ENCODE measurements at regions of chr17 and their contacts with region 1.

Region 1: GRCh38 chr17:18855831-18856569 is 1.9 kb upstream of the PRPSAP2 start:
- DNase-seq: peak; percentile 57 to 93 (median 85)
- ATAC-seq: peak; percentile 89
- H3K4me3 ChIP-seq: peak overlapping the region; percentile 76
- H3K4me3 Mint-ChIP-seq: peak overlapping the region; percentile 79 to 99 (median 96)
- H3K27ac ChIP-seq: peak overlapping the region; percentile 79
- H3K27ac Mint-ChIP-seq: peak overlapping the region; percentile 77 to 98 (median 92)
- H3K4me1 ChIP-seq: peaks cover 18 to 28% of the 10 kb centered on the region in 2 donors
- H3K4me1 Mint-ChIP-seq: peaks cover 29 to 52% (median 44%) of the 10 kb centered on the region in 7 donors
- H3K27me3 ChIP-seq: no peaks in the 10 kb centered on the region
- H3K27me3 Mint-ChIP-seq: no peaks in the 10 kb centered on the region

Region 2: GRCh38 chr17:18183334-18184142 is 672.5 kb before region 1 on chr17 and contains the start of gene ALKBH5:
- CTCF ChIA-PET with region 1: no interaction called
- POLR2A ChIA-PET with region 1: no interaction called
- intact Hi-C with region 1: loop called in 1 of 2 experiments (anchors 10 kb)
- DNase-seq: peak; percentile 97 to 99 (median 99)
- ATAC-seq: peak; percentile 88
- H3K4me3 ChIP-seq: peak within 1 kb of the TSS; percentile 78
- H3K4me3 Mint-ChIP-seq: peak within 1 kb of the TSS; percentile 83 to 99 (median 94)
- H3K27ac ChIP-seq: peak within 1 kb of the TSS; percentile 93
- H3K27ac Mint-ChIP-seq: peak within 1 kb of the TSS; percentile 96 to 99 (median 98)
- H3K4me1 ChIP-seq: peaks cover 36 to 40% of the 10 kb centered on the region in 2 donors
- H3K4me1 Mint-ChIP-seq: peaks cover 40 to 59% (median 46%) of the 10 kb centered on the region in 7 donors
- H3K27me3 ChIP-seq: no peaks in the 10 kb centered on the region
- H3K27me3 Mint-ChIP-seq: peaks cover 0 to 3% (median 0%) of the 10 kb centered on the region in 5 donors
- total RNA-seq, gene ALKBH5: 97.4 to 135 (median 108) TPM

Region 3: GRCh38 chr17:18314731-18315561 is 541.1 kb before region 1 on chr17 and contains the starts of genes SMCR8 and TOP3A:
- CTCF ChIA-PET with region 1: no interaction called
- POLR2A ChIA-PET with region 1: no interaction called
- intact Hi-C with region 1: loop called in 1 of 2 experiments (anchors 5 kb)
- DNase-seq: peak; percentile 86 to 99 (median 98)
- ATAC-seq: peak; percentile 96
- H3K4me3 ChIP-seq: peak within 1 kb of the TSS; percentile 95
- H3K4me3 Mint-ChIP-seq: peak within 1 kb of the TSS; percentile 89 to 98 (median 93)
- H3K27ac ChIP-seq: peak within 1 kb of the TSS; percentile 93
- H3K27ac Mint-ChIP-seq: peak within 1 kb of the TSS; percentile 92 to 99 (median 95)
- H3K4me1 ChIP-seq: peaks cover 50 to 54% of the 10 kb centered on the region in 2 donors
- H3K4me1 Mint-ChIP-seq: peaks cover 61 to 88% (median 83%) of the 10 kb centered on the region in 7 donors
- H3K27me3 ChIP-seq: no peaks in the 10 kb centered on the region
- H3K27me3 Mint-ChIP-seq: peaks cover 0 to 2% (median 0%) of the 10 kb centered on the region in 5 donors
- total RNA-seq, gene SMCR8: 29.0 to 61.7 (median 52.1) TPM
- total RNA-seq, gene TOP3A: 39.0 to 74.9 (median 43.6) TPM

Region 4: DNA sequence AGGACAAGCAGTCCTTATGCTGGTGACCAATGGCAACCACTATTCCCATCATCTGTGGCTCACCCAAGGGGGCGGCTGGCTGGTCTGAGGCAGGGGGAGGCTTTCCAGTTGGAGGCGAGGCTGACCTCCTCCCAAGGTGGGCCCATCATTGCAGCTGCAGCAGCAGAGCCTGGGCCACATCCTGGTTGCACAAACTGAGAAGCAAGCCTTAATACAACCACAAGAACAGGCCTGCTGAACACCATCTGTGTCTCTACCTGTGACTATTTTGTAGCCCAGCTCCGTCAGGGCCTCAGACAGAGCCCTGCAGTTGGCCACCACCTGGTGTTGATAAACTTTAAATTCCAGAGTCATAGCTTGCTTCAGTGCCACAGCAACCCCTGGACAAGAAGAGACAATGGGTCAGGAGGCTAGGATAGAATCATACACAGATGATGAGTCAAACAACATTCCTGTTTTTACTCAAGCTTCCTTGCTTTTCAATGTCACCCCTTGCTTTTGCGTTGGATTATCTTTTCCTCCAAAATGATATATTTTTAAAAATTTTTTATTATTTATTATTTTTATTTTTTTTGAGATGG is 523.0 kb before region 1 on chr17:
- CTCF ChIA-PET with region 1: no interaction called
- POLR2A ChIA-PET with region 1: no interaction called
- intact Hi-C with region 1: no loop called
- DNase-seq: no peak
- ATAC-seq: no peak
- H3K4me3 ChIP-seq: no peak overlapping the region
- H3K4me3 Mint-ChIP-seq: no peak overlapping the region
- H3K27ac ChIP-seq: no peak overlapping the region
- H3K27ac Mint-ChIP-seq: no peak overlapping the region
- H3K4me1 ChIP-seq: peaks cover 0 to 13% of the 10 kb centered on the region in 2 donors
- H3K4me1 Mint-ChIP-seq: peaks cover 8 to 15% (median 9%) of the 10 kb centered on the region in 7 donors
- H3K27me3 ChIP-seq: no peaks in the 10 kb centered on the region
- H3K27me3 Mint-ChIP-seq: no peaks in the 10 kb centered on the region

Region 5: DNA sequence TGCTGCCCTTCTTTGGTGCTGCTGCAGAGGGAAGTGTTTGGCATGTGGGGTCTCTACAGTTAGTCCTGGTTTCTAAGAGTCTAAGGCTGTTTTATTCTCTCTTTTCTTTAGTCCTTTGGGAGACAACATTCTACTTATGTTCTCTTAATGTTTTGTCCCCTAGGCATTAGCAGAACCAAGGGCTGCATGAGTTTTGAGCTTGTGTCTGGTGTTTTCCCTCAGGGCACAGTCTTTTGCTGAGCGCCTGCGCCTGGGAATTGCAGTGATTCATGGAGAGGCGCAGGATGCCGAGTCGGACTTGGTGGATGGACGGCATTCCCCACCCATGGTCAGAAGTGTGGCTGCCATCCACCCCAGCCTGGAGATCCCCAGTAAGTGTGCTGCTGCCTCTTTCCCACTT is 54.9 kb after region 1 on chr17:
- CTCF ChIA-PET with region 1: no interaction called
- POLR2A ChIA-PET with region 1: no interaction called
- intact Hi-C with region 1: no loop called
- DNase-seq: no peak
- ATAC-seq: no peak
- H3K4me3 ChIP-seq: no peak overlapping the region
- H3K4me3 Mint-ChIP-seq: no peak overlapping the region
- H3K27ac ChIP-seq: no peak overlapping the region
- H3K27ac Mint-ChIP-seq: no peak overlapping the region
- H3K4me1 ChIP-seq: no peaks in the 10 kb centered on the region
- H3K4me1 Mint-ChIP-seq: peaks cover 0 to 29% (median 14%) of the 10 kb centered on the region in 7 donors
- H3K27me3 ChIP-seq: no peaks in the 10 kb centered on the region
- H3K27me3 Mint-ChIP-seq: no peaks in the 10 kb centered on the region

Region 6: DNA sequence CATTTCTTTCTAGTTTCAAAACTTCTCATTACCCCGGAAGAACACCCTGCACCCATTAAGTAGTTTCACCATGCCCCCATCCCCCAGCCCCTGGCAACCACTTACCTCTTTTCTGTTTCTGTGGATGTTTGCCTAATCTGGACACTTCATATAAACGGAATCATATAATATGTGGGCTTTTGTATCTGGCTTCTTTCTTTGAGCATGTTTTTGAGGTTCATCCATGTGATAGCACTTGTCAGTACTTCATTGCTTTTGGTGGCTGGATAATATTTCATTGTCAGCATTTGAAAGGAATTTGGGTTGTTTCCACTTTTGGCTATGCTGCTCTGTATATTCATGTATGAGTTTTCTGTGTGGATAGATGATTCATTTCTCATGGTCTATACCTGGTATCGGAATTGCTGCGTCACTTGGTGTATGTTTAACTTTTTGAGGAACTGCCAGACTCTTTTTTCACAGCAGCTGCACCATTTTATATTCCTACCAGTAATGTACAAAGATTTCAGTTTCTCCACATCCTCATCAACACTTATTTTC is 66.0 kb after region 1 on chr17:
- CTCF ChIA-PET with region 1: no interaction called
- POLR2A ChIA-PET with region 1: no interaction called
- intact Hi-C with region 1: loop called (anchors 2 kb)
- DNase-seq: no peak
- ATAC-seq: no peak
- H3K4me3 ChIP-seq: no peak overlapping the region
- H3K4me3 Mint-ChIP-seq: peak overlapping the region in 8 of 10 donors; percentile 13 to 63 (median 50)
- H3K27ac ChIP-seq: no peak overlapping the region
- H3K27ac Mint-ChIP-seq: peak overlapping the region; percentile 20 to 70 (median 60)
- H3K4me1 ChIP-seq: peaks cover 9 to 58% of the 10 kb centered on the region in 2 donors
- H3K4me1 Mint-ChIP-seq: peaks cover 34 to 90% (median 74%) of the 10 kb centered on the region in 7 donors
- H3K27me3 ChIP-seq: no peaks in the 10 kb centered on the region
- H3K27me3 Mint-ChIP-seq: no peaks in the 10 kb centered on the region

Region 7: DNA sequence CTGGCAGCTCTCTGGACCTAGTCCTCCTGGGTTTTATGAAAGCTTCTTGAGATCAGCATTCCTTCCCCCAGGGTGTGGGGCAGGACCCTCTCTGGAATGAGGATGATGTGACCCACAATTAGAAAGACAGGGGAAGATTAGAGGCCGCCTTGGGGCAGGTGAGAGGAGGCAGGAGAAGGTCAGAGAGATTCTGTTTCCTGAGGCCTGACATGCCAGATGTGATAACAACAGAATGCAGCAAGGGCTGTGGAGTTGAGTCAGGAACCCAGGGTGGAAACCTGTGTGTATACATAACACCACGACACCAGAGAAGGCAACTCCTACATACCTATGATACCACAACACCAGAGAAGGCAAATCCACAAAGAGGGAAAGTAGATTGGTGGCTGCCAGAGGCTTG is 90.5 kb after region 1 on chr17:
- CTCF ChIA-PET with region 1: no interaction called
- POLR2A ChIA-PET with region 1: no interaction called
- intact Hi-C with region 1: no loop called
- DNase-seq: no peak
- ATAC-seq: no peak
- H3K4me3 ChIP-seq: no peak overlapping the region
- H3K4me3 Mint-ChIP-seq: no peak overlapping the region
- H3K27ac ChIP-seq: no peak overlapping the region
- H3K27ac Mint-ChIP-seq: peak overlapping the region in 1 of 9 donors; percentile 48
- H3K4me1 ChIP-seq: no peaks in the 10 kb centered on the region
- H3K4me1 Mint-ChIP-seq: peaks cover 0 to 38% (median 13%) of the 10 kb centered on the region in 7 donors
- H3K27me3 ChIP-seq: no peaks in the 10 kb centered on the region
- H3K27me3 Mint-ChIP-seq: peaks cover 0 to 38% (median 0%) of the 10 kb centered on the region in 5 donors

Region 8: GRCh38 chr17:19004421-19005136 is 148.6 kb after region 1 on chr17 and contains the start of gene FAM83G:
- CTCF ChIA-PET with region 1: no interaction called
- POLR2A ChIA-PET with region 1: interaction called, 3 read pairs
- intact Hi-C with region 1: loop called in 1 of 2 experiments (anchors 10 kb)
- DNase-seq: peak; percentile 67 to 92 (median 71)
- ATAC-seq: peak; percentile 90
- H3K4me3 ChIP-seq: peak within 1 kb of the TSS; percentile 61
- H3K4me3 Mint-ChIP-seq: peak within 1 kb of the TSS; percentile 73 to 94 (median 88)
- H3K27ac ChIP-seq: peak within 1 kb of the TSS; percentile 84
- H3K27ac Mint-ChIP-seq: peak within 1 kb of the TSS; percentile 59 to 94 (median 89)
- H3K4me1 ChIP-seq: peaks cover 18 to 30% of the 10 kb centered on the region in 2 donors
- H3K4me1 Mint-ChIP-seq: peaks cover 15 to 37% (median 25%) of the 10 kb centered on the region in 7 donors
- H3K27me3 ChIP-seq: no peaks in the 10 kb centered on the region
- H3K27me3 Mint-ChIP-seq: peaks cover 0 to 19% (median 0%) of the 10 kb centered on the region in 5 donors
- total RNA-seq, gene FAM83G: 3.9 to 9.1 (median 6.9) TPM

Region 9: DNA sequence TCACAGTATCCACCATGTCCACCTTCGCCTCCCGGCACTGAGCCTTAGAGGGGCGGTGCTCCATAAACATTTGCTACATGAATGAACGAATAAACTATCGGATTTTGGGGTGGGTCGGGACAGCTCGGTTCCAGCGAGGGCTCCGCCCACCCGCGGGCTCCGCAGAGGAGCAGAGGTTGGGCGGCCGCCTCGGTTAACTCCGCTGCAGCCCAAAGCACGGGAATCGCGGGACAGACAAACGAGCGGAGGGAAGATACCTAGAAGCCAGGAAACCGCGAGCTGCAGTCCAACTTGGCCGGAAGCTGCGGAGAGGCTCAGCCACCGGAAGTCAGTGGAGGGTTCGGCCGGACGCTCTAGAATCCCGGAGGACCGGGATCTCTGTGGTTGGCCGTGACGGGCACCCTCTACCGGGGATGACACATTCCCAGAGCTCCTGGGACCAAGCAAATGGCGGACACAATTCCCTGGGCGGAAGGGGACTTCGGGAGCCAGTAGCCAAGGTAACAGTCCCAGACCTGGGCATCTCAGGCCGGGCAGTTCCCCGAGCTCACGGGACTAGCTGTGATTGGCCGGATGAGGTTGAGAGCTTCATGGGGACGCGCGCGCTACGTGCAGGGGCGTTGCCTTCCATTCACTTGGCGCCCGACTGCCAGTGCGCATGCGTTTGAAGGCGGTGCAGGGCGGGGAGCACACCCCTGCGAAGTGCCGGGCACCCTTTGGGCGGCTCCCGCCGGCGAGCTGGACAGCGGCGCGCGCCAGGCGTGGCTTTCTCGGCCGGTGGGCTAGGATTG is 521.8 kb after region 1 on chr17:
- CTCF ChIA-PET with region 1: no interaction called
- POLR2A ChIA-PET with region 1: no interaction called
- intact Hi-C with region 1: loop called (anchors 5 to 10 kb)
- DNase-seq: peak; percentile 85 to 95 (median 92)
- ATAC-seq: peak; percentile 89
- H3K4me3 ChIP-seq: peak overlapping the region; percentile 99
- H3K4me3 Mint-ChIP-seq: peak overlapping the region; percentile 83 to 100 (median 97)
- H3K27ac ChIP-seq: peak overlapping the region; percentile 81
- H3K27ac Mint-ChIP-seq: peak overlapping the region; percentile 83 to 99 (median 97)
- H3K4me1 ChIP-seq: peaks cover 2 to 6% of the 10 kb centered on the region in 2 donors
- H3K4me1 Mint-ChIP-seq: peaks cover 6 to 29% (median 20%) of the 10 kb centered on the region in 7 donors
- H3K27me3 ChIP-seq: no peaks in the 10 kb centered on the region
- H3K27me3 Mint-ChIP-seq: no peaks in the 10 kb centered on the region

Region 10: GRCh38 chr17:19648475-19649406 is 792.7 kb after region 1 on chr17 and contains the start of gene ALDH3A2:
- CTCF ChIA-PET with region 1: no interaction called
- POLR2A ChIA-PET with region 1: interaction called, 3 read pairs
- intact Hi-C with region 1: loop called in 1 of 2 experiments (anchors 10 kb)
- DNase-seq: peak; percentile 80 to 97 (median 88)
- ATAC-seq: peak; percentile 98
- H3K4me3 ChIP-seq: peak within 1 kb of the TSS; percentile 90
- H3K4me3 Mint-ChIP-seq: peak within 1 kb of the TSS; percentile 91 to 99 (median 96)
- H3K27ac ChIP-seq: peak within 1 kb of the TSS; percentile 67
- H3K27ac Mint-ChIP-seq: peak within 1 kb of the TSS; percentile 93 to 98 (median 94)
- H3K4me1 ChIP-seq: peaks cover 0 to 6% of the 10 kb centered on the region in 2 donors
- H3K4me1 Mint-ChIP-seq: peaks cover 31 to 47% (median 39%) of the 10 kb centered on the region in 7 donors
- H3K27me3 ChIP-seq: no peaks in the 10 kb centered on the region
- H3K27me3 Mint-ChIP-seq: peaks cover 0 to 13% (median 0%) of the 10 kb centered on the region in 5 donors
- total RNA-seq, gene ALDH3A2: 26.3 to 53.4 (median 32.4) TPM

Measured in naive thymus-derived CD4-positive, alpha-beta T cell (primary cell).